PC-9 (cell line): ENCODE measurements at regions of chr12 and their contacts with region 1.

Region 1: GRCh38 chr12:2561367-2561766 is 233.4 kb upstream of the FKBP4 start:
- DNase-seq: no peak
- H3K4me3 ChIP-seq: no peak overlapping the region
- H3K27ac ChIP-seq: no peak overlapping the region
- H3K4me1 ChIP-seq: no peaks in the 10 kb centered on the region
- H3K27me3 ChIP-seq: peaks cover 98% of the 10 kb centered on the region
- CTCF ChIP-seq: no peak

Region 2: GRCh38 chr12:2013527-2014223 is 547.7 kb before region 1 on chr12:
- CTCF ChIA-PET with region 1: interaction called, 10 read pairs
- POLR2A ChIA-PET with region 1: no interaction called
- intact Hi-C with region 1: no loop called
- DNase-seq: no peak
- H3K4me3 ChIP-seq: no peak overlapping the region
- H3K27ac ChIP-seq: no peak overlapping the region
- H3K4me1 ChIP-seq: no peaks in the 10 kb centered on the region
- H3K27me3 ChIP-seq: peaks cover 45% of the 10 kb centered on the region
- CTCF ChIP-seq: no peak

Region 3: GRCh38 chr12:2439332-2440100 is 121.9 kb before region 1 on chr12:
- CTCF ChIA-PET with region 1: no interaction called
- POLR2A ChIA-PET with region 1: no interaction called
- intact Hi-C with region 1: no loop called
- DNase-seq: no peak
- H3K4me3 ChIP-seq: no peak overlapping the region
- H3K27ac ChIP-seq: no peak overlapping the region
- H3K4me1 ChIP-seq: no peaks in the 10 kb centered on the region
- H3K27me3 ChIP-seq: peaks cover 67% of the 10 kb centered on the region
- CTCF ChIP-seq: no peak